SK-N-SH (cell line): ENCODE measurements at regions of chr17 and their contacts with region 1.

Region 1: DNA sequence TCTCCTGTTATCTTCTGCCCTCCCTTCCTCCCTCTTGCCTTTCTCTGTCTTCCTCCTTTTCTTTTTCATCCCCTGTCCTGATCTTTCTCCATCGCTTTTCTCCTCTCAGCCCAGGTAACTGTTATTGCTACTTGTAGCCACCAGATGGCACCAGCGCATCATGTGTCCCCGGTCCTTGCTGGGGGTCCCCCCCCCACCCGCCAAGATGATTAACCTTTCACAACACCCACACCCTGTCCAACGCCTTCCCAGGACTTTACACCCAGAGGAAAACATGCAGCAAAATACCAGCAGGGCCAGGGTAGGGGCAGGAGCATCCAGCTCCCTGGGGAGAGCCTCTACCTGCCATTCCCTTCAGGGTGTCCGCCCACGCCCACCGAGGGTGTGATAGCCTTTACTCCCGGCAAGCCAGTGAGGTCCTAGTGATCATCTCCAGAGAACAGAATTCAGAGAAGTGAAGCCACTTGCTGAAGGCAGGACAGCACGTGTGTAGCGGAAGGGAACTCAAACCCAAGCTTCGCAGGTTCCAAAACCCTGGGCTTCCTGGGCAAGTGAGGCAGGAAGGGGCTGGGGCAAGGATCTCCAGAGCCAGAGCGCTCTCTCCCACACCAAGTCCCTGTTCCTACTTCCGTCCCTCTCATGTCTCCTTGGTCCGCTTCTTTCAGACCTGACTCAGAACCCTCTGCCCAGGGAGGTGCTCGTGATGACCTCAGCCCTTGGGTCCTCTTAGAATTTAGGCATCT is 13.5 kb upstream of the TAC4 start:
- DNase-seq: peak; percentile 93
- H3K4me3 ChIP-seq: no peak overlapping the region
- H3K27ac ChIP-seq: no peak overlapping the region
- H3K4me1 ChIP-seq: no peaks in the 10 kb centered on the region
- H3K27me3 ChIP-seq: peaks cover 6% of the 10 kb centered on the region; the same call in 1 of the 2 replicates
- CTCF ChIP-seq: peak; percentile 85
- EP300 ChIP-seq: no peak
- RAD21 ChIP-seq: peak; percentile 84

Region 2: DNA sequence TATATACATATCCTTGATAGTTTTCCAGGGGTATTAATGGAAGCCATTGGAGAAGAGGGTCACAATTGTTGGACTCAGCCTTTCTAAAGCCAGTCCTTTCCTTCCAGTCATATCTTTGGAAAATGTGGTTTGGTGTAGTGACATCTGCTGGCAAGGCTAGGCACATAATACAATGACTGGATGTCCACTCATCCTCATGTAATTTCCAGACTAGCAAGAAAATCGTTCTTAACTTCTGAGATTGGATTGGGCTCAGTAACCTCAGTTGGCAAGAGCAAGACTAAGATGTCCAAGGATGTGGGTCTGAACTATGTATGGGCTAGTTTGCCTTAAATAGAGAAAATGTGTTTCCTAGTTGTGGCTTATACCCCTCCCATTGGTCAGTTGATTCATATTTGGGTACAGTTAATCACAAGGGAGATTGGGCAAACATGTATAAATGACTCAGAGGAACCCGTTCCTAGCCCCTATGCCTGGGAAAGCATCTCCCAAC is 81.5 kb before region 1 on chr17:
- CTCF ChIA-PET with region 1: no interaction called
- POLR2A ChIA-PET with region 1: no interaction called
- DNase-seq: peak; percentile 40
- H3K4me3 ChIP-seq: no peak overlapping the region
- H3K27ac ChIP-seq: 0 out of 4 replicates have a peak overlapping the region, but pooled peaks of 1 of the 2 experiments have one; percentile 3
- H3K4me1 ChIP-seq: no peaks in the 10 kb centered on the region; a peak in 1 of 4 replicates
- H3K27me3 ChIP-seq: peaks cover 8% of the 10 kb centered on the region; the same call in 1 of the 2 replicates
- CTCF ChIP-seq: peak; percentile 74
- EP300 ChIP-seq: no peak
- RAD21 ChIP-seq: peak; percentile 71

Region 3: GRCh38 chr17:49873466-49873865 is 12.1 kb after region 1 on chr17:
- CTCF ChIA-PET with region 1: interaction called, 65 read pairs
- POLR2A ChIA-PET with region 1: no interaction called
- DNase-seq: no peak
- H3K4me3 ChIP-seq: no peak overlapping the region
- H3K27ac ChIP-seq: no peak overlapping the region
- H3K4me1 ChIP-seq: no peaks in the 10 kb centered on the region
- H3K27me3 ChIP-seq: peaks cover 36% of the 10 kb centered on the region
- CTCF ChIP-seq: no peak
- EP300 ChIP-seq: no peak
- RAD21 ChIP-seq: no peak